ENCODE measurements at regions of chr3 and their contacts with region 1.

Region 1: GRCh38 chr3:112979240-112979832 is 4.4 kb upstream of the CD200R1 start:
- DNase-seq: peak; percentile 11
- H3K4me3 ChIP-seq: no peak overlapping the region
- H3K27ac ChIP-seq: no peak overlapping the region
- H3K27me3 ChIP-seq: no peaks in the 10 kb centered on the region
- CTCF ChIP-seq: peak; percentile 69

Region 2: DNA sequence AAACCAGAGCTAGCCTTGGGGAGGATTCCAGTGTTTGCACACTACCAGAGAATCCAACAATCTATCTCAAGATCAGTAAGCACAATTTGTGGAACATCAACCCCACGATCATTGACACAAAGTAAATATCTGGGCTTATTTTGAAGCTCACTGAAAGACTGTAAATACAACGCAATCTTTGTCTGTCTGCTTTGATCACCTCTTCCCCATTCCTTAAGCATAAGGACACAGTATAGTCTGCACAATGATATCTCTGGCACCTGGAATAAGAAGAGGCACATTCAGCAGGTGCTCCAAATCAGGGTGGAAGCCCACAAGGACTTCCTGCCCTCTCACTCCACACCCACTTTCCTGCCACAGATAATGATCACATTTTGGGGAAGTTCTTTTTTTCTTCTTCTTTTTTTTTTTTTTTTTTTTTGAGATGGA is 506.1 kb before region 1 on chr3:
- CTCF ChIA-PET with region 1: no interaction called
- POLR2A ChIA-PET with region 1: no interaction called
- DNase-seq: no peak
- H3K4me3 ChIP-seq: no peak overlapping the region
- H3K27ac ChIP-seq: no peak overlapping the region
- H3K27me3 ChIP-seq: no peaks in the 10 kb centered on the region
- CTCF ChIP-seq: no peak

Region 3: DNA sequence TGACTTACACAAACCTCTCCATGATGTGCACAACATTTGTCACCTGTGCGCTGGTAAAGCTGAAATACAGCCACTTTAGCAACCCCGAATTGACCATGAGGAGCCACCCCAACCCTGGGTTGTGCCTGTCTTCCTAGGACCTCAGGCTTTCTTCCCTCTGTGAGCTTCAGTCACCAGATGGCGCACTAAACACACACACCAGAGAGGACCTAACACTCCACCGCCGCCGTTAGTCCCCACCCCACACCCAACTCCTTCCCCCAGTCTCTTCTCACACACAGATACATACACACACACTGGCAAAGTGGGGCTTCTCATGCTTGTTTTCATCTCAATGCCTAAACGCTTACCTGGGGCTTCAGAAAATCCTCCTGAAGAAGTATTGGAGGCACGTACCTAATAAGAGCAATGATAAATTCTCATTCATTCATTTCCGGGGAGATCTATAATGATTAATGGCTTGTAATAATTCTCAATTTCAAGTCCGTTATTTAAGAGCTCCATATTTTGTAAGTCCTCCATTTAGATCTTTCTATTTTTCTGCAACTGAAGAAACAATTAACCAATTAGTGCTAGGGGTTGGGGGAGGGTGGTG is 336.3 kb before region 1 on chr3:
- CTCF ChIA-PET with region 1: interaction called, 94 read pairs
- POLR2A ChIA-PET with region 1: no interaction called
- DNase-seq: peak; percentile 86
- H3K4me3 ChIP-seq: peak overlapping the region; percentile 28
- H3K27ac ChIP-seq: no peak overlapping the region
- H3K27me3 ChIP-seq: no peaks in the 10 kb centered on the region
- CTCF ChIP-seq: peak; percentile 96

Region 4: GRCh38 chr3:112746675-112747280 is 232.6 kb before region 1 on chr3:
- CTCF ChIA-PET with region 1: interaction called, 10 read pairs
- POLR2A ChIA-PET with region 1: no interaction called
- DNase-seq: no peak
- H3K4me3 ChIP-seq: no peak overlapping the region
- H3K27ac ChIP-seq: no peak overlapping the region
- H3K27me3 ChIP-seq: no peaks in the 10 kb centered on the region
- CTCF ChIP-seq: no peak

Region 5: DNA sequence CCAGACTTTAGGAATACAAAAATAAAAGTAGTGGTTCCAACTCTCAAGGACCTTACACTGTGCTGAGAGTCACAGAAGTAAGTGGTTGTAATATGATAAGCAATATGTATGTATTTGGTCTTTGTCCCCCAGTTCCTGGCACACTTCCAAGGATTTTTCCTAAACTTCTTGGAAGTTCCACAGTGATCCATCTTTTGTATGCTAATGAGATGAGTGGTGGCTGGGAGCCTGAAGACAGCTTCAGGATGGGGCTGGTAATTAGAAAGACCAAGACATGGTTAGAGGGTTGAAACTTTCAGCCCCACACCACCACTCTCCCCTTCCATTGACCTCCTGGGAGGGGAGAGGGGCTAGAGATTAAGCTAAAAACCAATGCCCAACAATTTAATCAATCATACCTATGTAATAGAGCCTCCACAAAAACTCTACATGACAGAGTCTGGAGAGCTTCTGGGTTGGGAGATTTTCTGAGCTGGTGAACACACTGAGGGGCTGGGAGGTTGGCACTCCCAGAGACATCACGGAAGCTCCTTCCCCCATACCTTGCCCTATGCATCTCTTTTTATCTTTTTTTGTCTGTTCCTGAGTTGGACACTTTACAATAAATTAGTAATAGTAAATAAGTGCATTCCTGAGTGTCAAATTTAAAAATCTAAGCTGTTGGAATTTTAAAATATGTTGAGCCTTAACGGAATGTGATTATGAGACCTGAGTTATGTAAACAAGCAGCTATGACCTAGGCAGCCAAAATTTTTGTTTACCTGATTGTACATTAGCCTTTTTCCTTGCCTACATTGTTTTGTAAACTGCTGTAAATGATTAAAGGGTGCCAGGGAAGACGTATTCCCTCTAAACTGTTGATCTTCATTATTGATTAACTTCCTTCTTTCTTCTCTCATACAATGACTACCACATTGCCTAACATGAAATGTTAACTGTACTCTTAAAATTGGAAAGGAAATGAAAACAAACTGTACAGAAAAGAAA is 157.0 kb before region 1 on chr3:
- CTCF ChIA-PET with region 1: interaction called, 29 read pairs
- POLR2A ChIA-PET with region 1: no interaction called
- DNase-seq: no peak
- H3K4me3 ChIP-seq: no peak overlapping the region
- H3K27ac ChIP-seq: no peak overlapping the region
- H3K27me3 ChIP-seq: no peaks in the 10 kb centered on the region
- CTCF ChIP-seq: no peak

Region 6: GRCh38 chr3:112990672-112991602 is 11.6 kb after region 1 on chr3 and contains the start of gene GTPBP8:
- CTCF ChIA-PET with region 1: interaction called, 27 read pairs
- POLR2A ChIA-PET with region 1: no interaction called
- DNase-seq: peak; percentile 59
- H3K4me3 ChIP-seq: peak within 1 kb of the TSS; percentile 94
- H3K27ac ChIP-seq: peak within 1 kb of the TSS; percentile 89
- H3K27me3 ChIP-seq: no peaks in the 10 kb centered on the region
- CTCF ChIP-seq: no peak
- polyA plus RNA-seq, gene GTPBP8: 14.9 and 17.3 TPM in 2 replicates